Activated CD8-positive, alpha-beta T cell treated with anti-CD3 and anti-CD28 coated beads, Interleukin-2, amount 10 ng/mL, durations not matched to agents 7 days and 5 days (primary cell): ENCODE measurements at regions of chr6 and their contacts with region 1.

Region 1: GRCh38 chr6:30730601-30731435 is 10.7 kb downstream of the TUBB start:
- DNase-seq: peak; percentile 92
- ATAC-seq: peak; percentile 95
- H3K4me3 Mint-ChIP-seq: peak overlapping the region; percentile 44
- H3K27ac Mint-ChIP-seq: peak overlapping the region; percentile 70
- H3K4me1 Mint-ChIP-seq: peaks cover 61% of the 10 kb centered on the region
- H3K27me3 Mint-ChIP-seq: no peaks in the 10 kb centered on the region

Region 2: DNA sequence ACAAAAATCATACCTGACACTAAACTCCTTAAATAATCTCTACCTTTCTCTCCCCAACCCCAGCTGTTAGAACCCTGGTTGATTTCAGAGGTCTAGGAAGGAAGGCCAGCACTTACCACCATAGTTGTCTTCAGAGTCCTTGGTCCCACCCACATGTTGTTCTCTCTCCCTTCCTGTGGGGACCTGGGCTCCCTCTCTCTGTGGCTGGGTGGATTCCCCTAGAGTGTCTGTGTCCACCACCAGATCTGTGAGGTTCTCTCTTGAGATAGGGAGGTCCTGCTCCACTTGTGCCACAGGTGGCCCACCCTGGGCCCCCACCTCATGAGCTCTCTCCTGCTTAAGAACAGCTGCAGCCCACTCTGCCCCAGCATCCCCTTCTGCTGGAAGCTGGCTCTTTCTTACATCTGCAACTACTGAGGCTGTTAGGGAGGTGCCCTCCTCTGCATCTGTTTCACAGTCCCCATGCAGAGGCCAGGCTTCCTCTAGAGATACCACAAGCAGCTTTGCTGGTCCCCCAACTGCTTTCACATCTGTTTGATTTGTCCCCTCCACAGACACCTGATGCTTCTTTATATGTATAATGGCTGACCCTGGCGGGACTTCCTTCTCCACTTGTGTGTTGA is 18.9 kb before region 1 on chr6:
- CTCF ChIA-PET with region 1: interaction called, 22 read pairs
- POLR2A ChIA-PET with region 1: no interaction called
- DNase-seq: peak; percentile 57
- ATAC-seq: peak; percentile 83
- H3K4me3 Mint-ChIP-seq: peak overlapping the region; percentile 63
- H3K27ac Mint-ChIP-seq: peak overlapping the region; percentile 81
- H3K4me1 Mint-ChIP-seq: peaks cover 61% of the 10 kb centered on the region
- H3K27me3 Mint-ChIP-seq: no peaks in the 10 kb centered on the region

Region 3: GRCh38 chr6:30742316-30743098 is 11.7 kb after region 1 on chr6 and contains the start of gene FLOT1:
- CTCF ChIA-PET with region 1: interaction called, 17 read pairs
- POLR2A ChIA-PET with region 1: interaction called, 17 read pairs
- DNase-seq: peak; percentile 98
- ATAC-seq: peak; percentile 78
- H3K4me3 Mint-ChIP-seq: peak within 1 kb of the TSS; percentile 99
- H3K27ac Mint-ChIP-seq: peak within 1 kb of the TSS; percentile 96
- H3K4me1 Mint-ChIP-seq: peaks cover 69% of the 10 kb centered on the region
- H3K27me3 Mint-ChIP-seq: no peaks in the 10 kb centered on the region
- total RNA-seq, gene FLOT1: 314 to 317 TPM

Region 4: GRCh38 chr6:30787954-30788353 is 57.1 kb after region 1 on chr6:
- CTCF ChIA-PET with region 1: interaction called, 14 read pairs
- POLR2A ChIA-PET with region 1: interaction called, 6 read pairs
- DNase-seq: peak; percentile 77
- ATAC-seq: peak; percentile 83
- H3K4me3 Mint-ChIP-seq: peak overlapping the region; percentile 53
- H3K27ac Mint-ChIP-seq: peak overlapping the region; percentile 90
- H3K4me1 Mint-ChIP-seq: peaks cover 76% of the 10 kb centered on the region
- H3K27me3 Mint-ChIP-seq: no peaks in the 10 kb centered on the region

Region 5: GRCh38 chr6:30800871-30801270 is 70.1 kb after region 1 on chr6:
- CTCF ChIA-PET with region 1: no interaction called
- POLR2A ChIA-PET with region 1: no interaction called
- DNase-seq: no peak
- ATAC-seq: no peak
- H3K4me3 Mint-ChIP-seq: no peak overlapping the region
- H3K27ac Mint-ChIP-seq: no peak overlapping the region
- H3K4me1 Mint-ChIP-seq: peaks cover 33% of the 10 kb centered on the region
- H3K27me3 Mint-ChIP-seq: no peaks in the 10 kb centered on the region

Region 6: DNA sequence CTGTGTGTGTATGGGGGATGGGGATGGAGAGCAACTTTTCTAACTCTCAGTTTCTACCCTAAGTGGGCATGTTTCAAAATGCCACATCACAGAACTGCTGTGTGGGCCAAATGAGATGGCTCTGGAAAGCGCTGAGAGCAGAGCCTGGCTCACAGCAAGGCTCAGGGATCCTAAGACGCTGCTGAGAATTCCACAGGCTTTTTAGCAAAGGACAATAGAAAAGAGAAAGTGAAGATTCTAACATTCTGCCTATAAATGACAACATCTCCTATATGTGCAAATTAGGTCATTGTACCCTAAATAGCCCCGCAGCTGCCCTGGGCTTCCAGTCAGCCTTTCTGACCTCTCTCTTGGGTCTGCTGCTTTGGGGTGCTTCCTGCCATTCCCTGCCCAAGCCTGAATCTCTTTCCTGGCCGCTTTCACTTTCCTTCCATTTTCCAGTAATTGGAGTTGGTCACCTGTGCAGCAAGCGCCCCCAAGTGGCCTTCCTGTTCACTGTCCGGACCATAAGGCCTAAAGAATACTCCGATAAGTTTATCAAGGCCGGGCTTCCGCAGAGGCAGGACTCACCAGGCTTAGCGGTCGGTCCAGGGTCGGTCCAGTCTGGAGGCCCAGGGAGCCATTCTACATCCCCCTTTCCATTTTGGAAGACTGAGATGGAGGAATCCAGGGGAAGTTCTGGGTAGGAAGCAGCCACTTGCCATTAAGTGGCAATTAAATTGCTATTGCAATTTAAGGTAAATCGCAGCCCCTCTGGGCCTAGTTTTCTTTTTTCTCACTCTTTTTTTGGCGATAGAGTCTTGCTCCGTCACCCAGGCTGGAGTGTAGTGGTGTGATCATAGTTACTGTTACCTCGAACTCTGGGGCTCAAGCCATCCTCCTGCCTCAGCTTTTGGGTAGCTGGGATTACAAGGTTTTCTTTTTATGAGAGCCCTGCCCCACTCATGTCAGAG is 146.9 kb after region 1 on chr6:
- CTCF ChIA-PET with region 1: interaction called, 17 read pairs
- POLR2A ChIA-PET with region 1: interaction called, 4 read pairs
- DNase-seq: peak; percentile 85
- ATAC-seq: peak; percentile 90
- H3K4me3 Mint-ChIP-seq: peak overlapping the region; percentile 68
- H3K27ac Mint-ChIP-seq: peak overlapping the region; percentile 72
- H3K4me1 Mint-ChIP-seq: peaks cover 26% of the 10 kb centered on the region
- H3K27me3 Mint-ChIP-seq: peaks cover 6% of the 10 kb centered on the region